Dorsolateral prefrontal cortex (tissue), 120 donors: ENCODE measurements at regions of chr1 and their contacts with region 1.

Region 1: GRCh38 chr1:113140588-113141446 is 67.8 kb downstream of the LRIG2 start:
- DNase-seq: peak in 9 of 10 donors; percentile 37 to 78 (median 67)
- H3K4me3 ChIP-seq: peak overlapping the region in 41 of 59 donors; percentile 1 to 50 (median 30)
- H3K27ac ChIP-seq: peak overlapping the region in 38 of 59 donors; percentile 7 to 78 (median 57)
- H3K27me3 ChIP-seq: no peaks in the 10 kb centered on the region
- CTCF ChIP-seq: peak; percentile 77 to 93 (median 87)

Region 2: DNA sequence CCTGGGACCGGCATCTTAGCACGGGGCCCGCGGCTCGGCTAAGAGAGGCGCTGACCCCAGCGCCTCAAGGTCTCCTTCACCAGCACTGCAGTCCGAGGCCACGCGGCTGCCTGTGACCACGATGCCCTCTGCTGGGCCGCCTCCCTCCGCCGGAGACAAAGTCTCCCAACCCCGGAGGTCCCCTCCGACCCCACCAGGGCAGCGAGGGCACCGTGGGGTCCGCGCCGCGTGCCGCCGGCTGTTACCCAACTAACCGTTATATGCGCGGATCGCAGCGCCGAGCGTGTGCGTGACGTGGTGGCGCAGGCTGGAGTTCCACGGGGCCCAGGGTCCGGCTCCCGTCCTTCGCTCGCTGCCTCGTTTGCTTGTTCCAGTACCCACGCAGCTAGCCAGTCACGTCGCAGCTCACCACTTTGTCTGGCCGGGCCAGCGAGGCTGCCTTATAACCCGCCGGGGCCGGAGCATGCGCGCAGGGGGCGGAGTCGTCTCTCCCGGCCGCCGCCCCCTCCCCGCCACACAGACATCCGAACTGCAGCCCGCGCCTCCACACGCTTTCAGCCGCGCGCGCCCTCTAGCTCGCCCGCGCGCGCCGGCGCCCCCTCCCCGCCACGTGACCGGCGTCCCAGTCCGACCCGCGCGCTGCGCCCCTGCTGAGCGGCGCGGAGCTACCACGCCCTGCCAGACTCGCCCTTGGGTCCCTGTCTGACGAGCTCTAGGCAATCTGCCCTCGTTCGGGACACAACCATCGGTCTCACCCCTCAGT is 184.9 kb before region 1 on chr1 and contains the start of gene SLC16A1:
- intact Hi-C with region 1: no loop called
- DNase-seq: peak; percentile 90 to 97 (median 95)
- H3K4me3 ChIP-seq: peak within 1 kb of the TSS; percentile 66 to 99 (median 88)
- H3K27ac ChIP-seq: peak within 1 kb of the TSS; percentile 65 to 98 (median 94)
- H3K27me3 ChIP-seq: no peaks in the 10 kb centered on the region
- CTCF ChIP-seq: peak in 55 of 56 donors; percentile 18 to 75 (median 52)
- total RNA-seq, gene SLC16A1: 13.6 to 112 (median 47.3) TPM

Region 3: GRCh38 chr1:113452921-113453770 is 312.3 kb after region 1 on chr1:
- intact Hi-C with region 1: loop called in 1 of 2 experiments (anchors 2 kb)
- DNase-seq: peak in 1 of 10 donors; percentile 23
- H3K4me3 ChIP-seq: no peak overlapping the region
- H3K27ac ChIP-seq: no peak overlapping the region
- H3K27me3 ChIP-seq: no peaks in the 10 kb centered on the region
- CTCF ChIP-seq: peak in 50 of 56 donors; percentile 6 to 58 (median 40)

Region 4: DNA sequence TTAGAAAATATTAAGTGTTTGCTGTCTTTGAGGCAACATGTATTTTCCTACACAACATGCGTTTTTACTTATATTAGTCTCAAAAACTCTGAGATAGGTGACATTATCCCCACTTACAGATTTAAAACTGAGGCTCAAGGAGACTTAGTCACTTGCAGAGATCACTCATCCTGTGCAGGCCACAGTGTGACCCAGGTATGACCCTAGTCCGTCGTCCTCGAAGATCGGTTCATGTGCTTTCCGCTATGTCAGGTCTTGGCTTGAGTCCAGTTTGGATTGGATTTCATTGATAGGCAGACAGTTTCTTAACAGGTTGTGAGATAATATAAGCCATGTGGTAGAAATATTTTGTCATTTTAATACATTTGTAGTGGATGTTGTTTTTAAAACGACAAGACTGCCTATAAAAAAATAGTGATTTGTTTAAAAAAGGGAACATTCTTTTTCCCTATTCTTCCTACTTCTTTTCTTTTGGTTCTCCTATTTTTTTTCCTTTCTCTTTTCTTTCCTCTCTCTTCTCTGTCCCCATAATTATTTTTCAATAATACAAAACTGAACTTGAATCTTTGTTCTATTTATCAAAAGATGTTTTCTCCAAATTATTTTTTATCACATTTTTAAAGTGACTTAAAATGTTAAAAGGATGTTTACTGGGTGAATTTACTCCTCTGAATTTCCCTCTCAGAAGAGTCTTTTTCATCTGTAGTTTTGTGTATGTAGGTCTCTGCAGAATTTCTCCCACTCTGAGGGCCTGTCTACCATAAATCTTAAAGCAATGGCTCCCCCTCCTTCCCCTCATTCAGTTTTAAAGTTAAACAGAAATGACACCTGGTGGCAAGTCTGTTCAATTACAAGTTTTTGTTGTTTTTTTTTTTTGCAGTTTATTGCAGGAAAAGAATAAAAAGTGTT is 536.7 kb after region 1 on chr1:
- intact Hi-C with region 1: loop called (anchors 2 to 5 kb)
- DNase-seq: no peak
- H3K4me3 ChIP-seq: no peak overlapping the region
- H3K27ac ChIP-seq: no peak overlapping the region
- H3K27me3 ChIP-seq: no peaks in the 10 kb centered on the region
- CTCF ChIP-seq: peak; percentile 44 to 86 (median 71)